Activated T-helper 1 cell treated with anti-CD3 and anti-CD28 coated beads, Interleukin-12 subunit alpha, Interleukin-12 subunit beta, Interleukin-2, Interleukin-4 antibody, amounts not matched to agents 30 ng/mL and 10 ng/mL and 1 ng/mL, durations not matched to agents 14 hours and 24 hours and 36 hours (primary cell): ENCODE measurements at regions of chr9 and their contacts with region 1.

Region 1: GRCh38 chr9:93159601-93160471 is 24.1 kb upstream of the WNK2 start:
- DNase-seq: peak; percentile 67
- H3K4me3 Mint-ChIP-seq: no peak overlapping the region
- H3K27ac Mint-ChIP-seq: no peak overlapping the region
- H3K4me1 Mint-ChIP-seq: peaks cover 25% of the 10 kb centered on the region
- H3K27me3 Mint-ChIP-seq: no peaks in the 10 kb centered on the region

Region 2: GRCh38 chr9:92877531-92878430 is 282.1 kb before region 1 on chr9 and contains the start of gene ZNF484:
- intact Hi-C with region 1: loop called (anchors 10 kb)
- DNase-seq: peak; percentile 92
- H3K4me3 Mint-ChIP-seq: peak within 1 kb of the TSS; percentile 92
- H3K27ac Mint-ChIP-seq: peak within 1 kb of the TSS; percentile 97
- H3K4me1 Mint-ChIP-seq: peaks cover 46% of the 10 kb centered on the region
- H3K27me3 Mint-ChIP-seq: peaks cover 4% of the 10 kb centered on the region
- total RNA-seq, gene ZNF484: 7.2 and 8.1 TPM in 2 replicates

Region 3: DNA sequence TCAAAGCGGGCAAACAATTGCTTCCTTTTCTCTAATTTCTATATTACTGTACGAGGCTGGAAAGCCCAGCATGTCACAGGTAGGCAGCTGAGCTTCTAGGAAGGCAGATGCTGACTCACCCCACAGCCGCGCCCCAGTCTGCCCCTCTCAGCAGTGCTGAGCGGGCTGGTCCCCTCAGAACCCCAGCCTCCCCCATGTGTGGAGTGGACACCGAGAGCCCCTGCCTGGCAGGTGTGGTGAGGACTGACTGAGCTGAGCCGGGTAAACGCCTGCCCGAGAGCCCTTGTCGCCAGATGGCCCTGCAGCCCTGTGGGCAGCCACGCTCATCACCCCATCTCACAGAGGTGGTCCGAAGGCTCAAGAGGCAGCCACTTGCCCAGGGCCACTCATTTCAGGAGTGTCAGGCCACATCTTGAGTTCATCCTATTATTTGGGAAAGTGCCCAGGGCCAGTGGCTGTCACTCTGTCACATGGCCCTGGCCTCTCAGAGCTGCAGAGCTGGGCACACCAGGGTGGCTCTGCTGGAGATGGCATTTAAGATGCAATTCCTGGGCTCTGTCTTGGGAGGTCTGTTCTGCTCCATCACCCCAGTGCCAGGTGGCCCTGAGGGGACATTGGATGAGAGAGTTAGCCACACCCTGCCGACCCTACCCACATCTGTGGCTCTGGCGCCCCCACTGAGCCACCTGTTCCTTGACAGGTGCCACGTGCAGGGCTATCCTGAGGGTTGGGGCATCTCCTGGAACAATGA is 51.4 kb before region 1 on chr9:
- intact Hi-C with region 1: loop called (anchors 1 kb)
- DNase-seq: peak; percentile 52
- H3K4me3 Mint-ChIP-seq: peak overlapping the region; percentile 58
- H3K27ac Mint-ChIP-seq: peak overlapping the region; percentile 75
- H3K4me1 Mint-ChIP-seq: peaks cover 53% of the 10 kb centered on the region
- H3K27me3 Mint-ChIP-seq: no peaks in the 10 kb centered on the region

Region 4: DNA sequence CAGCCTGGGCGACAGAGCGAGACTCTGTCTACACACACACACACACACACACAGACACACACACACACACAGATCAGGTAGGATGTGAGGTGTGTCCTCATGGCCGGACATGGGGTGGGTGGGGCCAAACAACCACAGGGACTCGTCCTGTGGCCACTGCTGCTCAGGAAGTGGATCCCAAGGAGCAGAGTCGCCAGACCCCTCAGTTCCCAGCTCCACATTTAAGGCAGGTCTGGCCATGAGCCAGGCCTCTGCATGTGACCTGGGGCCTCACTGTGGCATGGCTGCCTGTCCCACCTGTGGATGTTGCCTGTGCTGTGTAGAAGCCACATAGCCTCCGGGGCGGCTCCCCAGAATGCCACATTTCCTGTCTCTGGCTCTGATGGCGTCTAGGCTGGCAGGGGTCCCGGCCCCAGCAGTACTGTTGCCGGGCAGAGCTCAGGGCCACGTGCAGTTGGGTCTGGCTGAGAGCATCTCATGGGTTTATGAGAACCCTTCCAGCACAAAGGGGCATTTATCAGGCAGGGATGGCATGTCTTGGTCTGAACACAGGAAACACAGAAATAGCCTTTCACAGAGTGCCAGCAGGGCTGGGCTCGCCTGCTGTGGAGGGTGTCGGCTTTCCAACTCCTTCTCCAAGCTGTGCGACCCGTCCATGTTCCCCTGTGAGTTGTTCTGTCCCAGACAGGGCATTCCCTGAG is 15.9 kb before region 1 on chr9:
- intact Hi-C with region 1: loop called (anchors 1 kb)
- DNase-seq: peak; percentile 43
- H3K4me3 Mint-ChIP-seq: no peak overlapping the region
- H3K27ac Mint-ChIP-seq: peak overlapping the region; percentile 93
- H3K4me1 Mint-ChIP-seq: peaks cover 38% of the 10 kb centered on the region
- H3K27me3 Mint-ChIP-seq: no peaks in the 10 kb centered on the region

Region 5: GRCh38 chr9:93302551-93303257 is 142.9 kb after region 1 on chr9:
- intact Hi-C with region 1: loop called (anchors 1 kb)
- DNase-seq: peak; percentile 36
- H3K4me3 Mint-ChIP-seq: no peak overlapping the region
- H3K27ac Mint-ChIP-seq: no peak overlapping the region
- H3K4me1 Mint-ChIP-seq: peaks cover 9% of the 10 kb centered on the region
- H3K27me3 Mint-ChIP-seq: no peaks in the 10 kb centered on the region

Region 6: DNA sequence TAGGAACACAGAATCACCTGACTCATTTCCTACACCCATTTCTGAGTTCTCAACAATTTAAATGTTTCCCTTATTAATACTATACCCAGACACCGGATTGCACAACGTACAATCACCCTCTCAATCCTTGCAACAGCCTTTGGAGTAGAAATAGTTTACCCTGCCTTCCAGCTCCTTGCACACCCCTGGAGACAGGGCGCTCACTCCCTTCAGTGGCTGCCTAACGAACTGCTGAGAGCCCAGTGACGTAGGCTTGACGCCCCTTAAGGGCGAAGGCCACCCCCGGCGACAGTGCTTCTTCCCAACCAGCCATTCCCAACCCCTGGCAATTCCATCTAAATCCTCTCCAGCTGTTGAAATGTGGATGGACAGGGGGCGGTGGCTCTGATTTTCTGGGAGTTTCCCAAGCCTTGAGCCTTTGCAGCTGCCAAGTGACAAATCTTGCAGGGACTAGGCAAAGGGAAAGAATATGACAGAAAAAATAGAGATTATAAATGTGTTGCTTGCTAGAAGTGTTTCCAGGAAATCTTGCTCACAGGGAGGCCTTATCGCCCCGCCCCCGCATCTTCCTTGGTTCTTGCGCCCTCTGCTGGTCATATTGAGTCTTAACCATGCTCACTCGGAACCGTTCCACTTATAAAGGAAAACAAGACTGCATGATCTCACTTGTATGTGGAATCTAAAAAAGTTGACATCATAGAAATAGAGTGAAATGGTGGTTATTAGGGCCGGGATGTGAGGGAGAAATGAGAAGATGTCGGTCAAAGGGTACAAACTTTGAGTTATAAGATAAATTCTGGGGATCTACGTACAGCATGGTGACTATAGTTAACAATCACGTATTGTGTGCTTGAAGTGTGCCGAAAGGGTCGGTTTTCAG is 803.0 kb after region 1 on chr9:
- intact Hi-C with region 1: loop called (anchors 1 kb)
- DNase-seq: peak; percentile 73
- H3K4me3 Mint-ChIP-seq: no peak overlapping the region
- H3K27ac Mint-ChIP-seq: no peak overlapping the region
- H3K4me1 Mint-ChIP-seq: peaks cover 16% of the 10 kb centered on the region
- H3K27me3 Mint-ChIP-seq: peaks cover 39% of the 10 kb centered on the region